ENCODE measurements at regions of chr11 and their contacts with region 1.

Region 1: DNA sequence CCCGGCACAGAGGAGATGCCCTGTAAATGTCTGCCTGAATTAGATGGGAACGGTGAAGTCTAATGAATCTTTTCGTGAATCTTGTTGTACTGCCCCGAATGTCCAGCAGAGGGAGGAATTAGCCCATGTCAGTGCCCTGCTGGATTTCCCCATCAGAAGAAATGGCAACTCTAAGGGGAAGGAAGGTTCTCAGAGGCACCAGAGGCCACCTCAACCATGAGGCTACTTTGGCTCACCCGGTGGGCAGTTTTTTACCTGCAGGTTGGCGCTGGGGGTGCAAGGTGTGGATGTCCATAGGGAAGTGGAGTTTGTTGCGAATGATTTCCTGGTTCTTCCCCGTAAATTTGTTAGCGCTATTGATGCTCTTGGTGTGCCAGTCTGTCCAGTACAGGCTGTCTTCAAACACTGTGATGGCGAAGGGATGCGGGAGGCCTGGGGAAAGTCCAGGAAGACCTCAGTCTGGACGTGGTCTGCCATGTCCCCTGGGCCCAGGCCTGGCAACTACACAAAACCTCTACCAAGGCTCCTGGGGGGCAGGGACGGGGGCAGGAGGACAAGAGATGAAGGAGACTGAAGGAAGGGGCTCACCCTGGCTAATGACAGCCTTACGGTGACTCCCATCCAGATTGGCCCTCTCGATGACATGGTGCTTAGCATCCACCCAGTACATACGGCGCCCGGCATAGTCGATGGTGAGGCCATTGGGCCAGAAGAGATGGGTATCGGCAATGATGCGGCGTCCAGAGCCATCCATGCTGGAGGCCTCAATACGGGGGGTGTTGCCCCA is 28.5 kb downstream of the LRP4 start:
- DNase-seq: peak; percentile 74
- H3K4me3 Mint-ChIP-seq: no peak overlapping the region
- H3K27ac Mint-ChIP-seq: no peak overlapping the region
- H3K4me1 Mint-ChIP-seq: no peaks in the 10 kb centered on the region
- H3K27me3 Mint-ChIP-seq: peaks cover 14% of the 10 kb centered on the region
- CTCF ChIP-seq: peak; percentile 74

Region 2: GRCh38 chr11:47161134-47161854 is 271.4 kb after region 1 on chr11:
- CTCF ChIA-PET with region 1: no interaction called
- intact Hi-C with region 1: loop called (anchors 1 kb)
- DNase-seq: peak; percentile 73
- H3K4me3 Mint-ChIP-seq: no peak overlapping the region
- H3K27ac Mint-ChIP-seq: peak overlapping the region; percentile 23
- H3K4me1 Mint-ChIP-seq: no peaks in the 10 kb centered on the region
- H3K27me3 Mint-ChIP-seq: no peaks in the 10 kb centered on the region
- CTCF ChIP-seq: peak; percentile 79

Measured in Calu3 (cell line).